ENCODE measurements at regions of chr14 and their contacts with region 1.

Region 1: GRCh38 chr14:20613094-20614037 is 22.2 kb upstream of the RNASE12 start:
- DNase-seq: peak; percentile 80 to 88 (median 86)
- H3K4me3 ChIP-seq: peak overlapping the region; percentile 57
- H3K27ac ChIP-seq: peak overlapping the region; percentile 73 to 79
- H3K4me1 ChIP-seq: no peaks in the 10 kb centered on the region
- H3K27me3 ChIP-seq: no peaks in the 10 kb centered on the region
- CTCF ChIP-seq: peak; percentile 50 to 96 (median 95)
- EP300 ChIP-seq: no peak
- POLR2A ChIP-seq: no peak

Region 2: GRCh38 chr14:20278414-20278813 is 335.0 kb before region 1 on chr14:
- intact Hi-C with region 1: no loop called
- DNase-seq: peak in 2 of 5 donors; percentile 31 to 37
- H3K4me3 ChIP-seq: no peak overlapping the region
- H3K27ac ChIP-seq: no peak overlapping the region
- H3K4me1 ChIP-seq: no peaks in the 10 kb centered on the region
- H3K27me3 ChIP-seq: no peaks in the 10 kb centered on the region
- CTCF ChIP-seq: no peak
- EP300 ChIP-seq: no peak
- POLR2A ChIP-seq: no peak

Region 3: GRCh38 chr14:20327005-20327869 is 286.1 kb before region 1 on chr14:
- intact Hi-C with region 1: loop called in 3 of 4 experiments (anchors 5 kb)
- DNase-seq: no peak
- H3K4me3 ChIP-seq: no peak overlapping the region
- H3K27ac ChIP-seq: no peak overlapping the region
- H3K4me1 ChIP-seq: no peaks in the 10 kb centered on the region
- H3K27me3 ChIP-seq: no peaks in the 10 kb centered on the region
- CTCF ChIP-seq: peak; percentile 25 to 81 (median 70)
- EP300 ChIP-seq: no peak
- POLR2A ChIP-seq: no peak

Region 4: GRCh38 chr14:20343092-20343861 is 270.1 kb before region 1 on chr14 and contains the start of gene PARP2:
- intact Hi-C with region 1: loop called in 1 of 4 experiments (anchors 5 kb)
- DNase-seq: peak; percentile 96 to 97 (median 97)
- H3K4me3 ChIP-seq: peak within 1 kb of the TSS; percentile 60
- H3K27ac ChIP-seq: peak within 1 kb of the TSS; percentile 89 to 92
- H3K4me1 ChIP-seq: no peaks in the 10 kb centered on the region
- H3K27me3 ChIP-seq: no peaks in the 10 kb centered on the region
- CTCF ChIP-seq: peak in 1 of 3 donors; percentile 16
- EP300 ChIP-seq: peak; percentile 76
- POLR2A ChIP-seq: peak; percentile 89
- total RNA-seq, gene PARP2: 7.1 to 25.6 (median 22.8) TPM

Region 5: DNA sequence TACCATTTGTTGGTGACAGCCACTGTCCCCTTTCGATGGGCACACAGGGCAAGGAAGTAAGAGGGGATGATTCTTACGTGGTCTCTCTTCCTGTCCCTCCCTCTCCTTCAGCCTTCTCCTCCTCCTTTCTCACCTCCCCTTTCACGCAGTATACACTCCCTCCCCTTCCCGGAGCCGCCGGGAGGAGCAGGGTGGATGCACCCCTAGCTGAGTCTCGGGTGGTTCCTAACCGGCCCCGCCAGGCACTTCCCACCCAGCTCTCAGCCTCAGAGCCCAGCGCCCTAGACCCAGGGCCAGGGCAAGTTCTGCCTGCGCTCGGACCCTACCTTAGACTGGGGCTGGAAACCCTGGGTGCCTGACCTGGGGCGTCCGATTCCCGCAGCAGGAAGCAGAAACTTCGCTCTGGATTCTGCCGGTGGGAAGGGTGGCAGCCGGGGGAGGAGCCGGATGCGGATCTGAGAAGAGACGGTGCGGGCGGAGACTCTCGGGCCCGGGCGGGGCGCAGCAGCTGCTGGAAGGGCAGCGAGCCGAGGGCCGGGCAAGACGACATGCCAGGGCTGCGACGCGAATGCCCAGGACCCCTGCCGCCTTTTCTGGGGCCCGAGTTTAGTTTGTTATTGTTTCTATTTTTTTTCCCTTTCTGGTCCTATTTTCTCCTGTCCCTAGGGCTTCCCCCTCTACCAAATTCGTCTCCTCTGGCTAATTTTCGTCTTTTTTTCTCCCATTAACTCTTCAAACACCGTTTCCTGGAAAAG is 200.1 kb before region 1 on chr14 and contains the start of gene TEP1:
- intact Hi-C with region 1: loop called in 1 of 4 experiments (anchors 5 kb)
- DNase-seq: peak; percentile 81 to 89 (median 85)
- H3K4me3 ChIP-seq: peak within 1 kb of the TSS; percentile 68
- H3K27ac ChIP-seq: peak within 1 kb of the TSS; percentile 85 to 92
- H3K4me1 ChIP-seq: no peaks in the 10 kb centered on the region
- H3K27me3 ChIP-seq: no peaks in the 10 kb centered on the region
- CTCF ChIP-seq: no peak
- EP300 ChIP-seq: no peak
- POLR2A ChIP-seq: peak; percentile 68
- total RNA-seq, gene TEP1: 8.2 to 24.0 (median 18.2) TPM

Region 6: DNA sequence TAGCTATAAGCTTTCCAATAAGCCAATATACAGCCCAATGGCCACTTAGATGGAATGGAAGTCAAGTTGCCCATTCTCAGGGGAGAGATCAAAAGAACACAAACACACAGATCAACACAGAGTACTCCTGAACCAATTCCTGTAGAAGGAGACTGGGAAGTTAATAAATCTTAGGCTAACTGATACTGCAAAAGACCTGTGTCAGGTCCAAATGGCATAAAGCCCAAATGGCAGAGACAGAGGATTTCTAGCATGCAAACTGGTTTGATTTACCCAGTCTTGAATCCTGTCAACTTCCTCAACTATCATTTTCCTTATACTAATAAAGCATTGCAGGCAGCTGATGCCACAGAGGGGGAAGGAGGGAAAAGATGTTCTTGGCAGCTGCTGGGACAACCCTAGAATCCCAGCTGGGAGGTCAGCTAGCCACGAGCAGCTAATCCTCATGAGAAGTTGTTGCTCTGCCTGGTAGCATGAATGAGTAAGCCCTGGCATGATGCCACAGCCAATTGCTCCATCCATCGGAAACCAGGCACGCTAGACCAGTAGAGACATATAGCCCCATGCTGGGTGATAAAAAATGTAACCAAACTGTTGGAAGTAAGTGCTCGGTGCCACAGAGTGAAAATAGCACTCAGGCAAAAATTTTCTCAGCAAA is 101.4 kb after region 1 on chr14:
- intact Hi-C with region 1: no loop called
- DNase-seq: peak in 4 of 5 donors; percentile 14 to 50 (median 35)
- H3K4me3 ChIP-seq: no peak overlapping the region
- H3K27ac ChIP-seq: no peak overlapping the region
- H3K4me1 ChIP-seq: no peaks in the 10 kb centered on the region
- H3K27me3 ChIP-seq: no peaks in the 10 kb centered on the region
- CTCF ChIP-seq: no peak
- EP300 ChIP-seq: no peak
- POLR2A ChIP-seq: no peak